IMR-90 (cell line): ENCODE measurements at regions of chr12 and their contacts with region 1.

Region 1: GRCh38 chr12:120228291-120229070 is 27.6 kb upstream of the RPLP0 start:
- DNase-seq: peak; percentile 79
- ATAC-seq: peak; percentile 45
- H3K4me3 ChIP-seq: no peak overlapping the region
- H3K27ac ChIP-seq: peak overlapping the region; percentile 93
- H3K4me1 ChIP-seq: peaks cover 53% of the 10 kb centered on the region
- H3K27me3 ChIP-seq: no peaks in the 10 kb centered on the region
- CTCF ChIP-seq: peak; percentile 96
- POLR2A ChIP-seq: peak; percentile 46; the same call in 1 of the 2 replicates
- RAD21 ChIP-seq: peak; percentile 98

Region 2: DNA sequence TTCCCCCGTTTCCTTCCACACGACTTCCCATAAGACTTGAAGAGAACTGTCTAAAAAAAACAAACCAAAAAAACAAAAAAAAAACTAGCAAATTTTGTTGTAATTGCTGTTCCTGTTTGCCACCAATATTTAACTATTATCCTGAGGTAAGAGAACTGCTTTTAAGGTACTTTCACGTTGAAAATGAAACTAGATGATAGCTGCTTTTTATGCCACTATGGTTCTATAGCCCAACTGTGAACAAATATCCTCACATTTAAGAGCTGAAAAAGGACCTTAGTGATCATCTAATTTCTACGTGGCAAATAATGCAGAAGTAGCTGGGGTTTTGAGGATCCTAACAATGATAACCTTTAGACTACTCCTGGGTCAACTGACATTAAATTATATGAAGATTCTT is 1954.4 kb before region 1 on chr12:
- CTCF ChIA-PET with region 1: interaction called, 12 read pairs
- POLR2A ChIA-PET with region 1: no interaction called
- dilution Hi-C with region 1: no loop called
- in situ Hi-C with region 1: no loop called
- intact Hi-C with region 1: no loop called
- DNase-seq: no peak
- ATAC-seq: no peak
- H3K4me3 ChIP-seq: no peak overlapping the region
- H3K27ac ChIP-seq: no peak overlapping the region
- H3K4me1 ChIP-seq: no peaks in the 10 kb centered on the region
- H3K27me3 ChIP-seq: no peaks in the 10 kb centered on the region
- CTCF ChIP-seq: no peak
- POLR2A ChIP-seq: no peak
- RAD21 ChIP-seq: no peak

Region 3: GRCh38 chr12:120242275-120242799 is 13.9 kb after region 1 on chr12:
- CTCF ChIA-PET with region 1: interaction called, 13 read pairs
- POLR2A ChIA-PET with region 1: interaction called, 12 read pairs
- dilution Hi-C with region 1: no loop called
- in situ Hi-C with region 1: no loop called
- intact Hi-C with region 1: no loop called
- DNase-seq: no peak
- ATAC-seq: no peak
- H3K4me3 ChIP-seq: no peak overlapping the region
- H3K27ac ChIP-seq: no peak overlapping the region
- H3K4me1 ChIP-seq: peaks cover 41% of the 10 kb centered on the region
- H3K27me3 ChIP-seq: no peaks in the 10 kb centered on the region
- CTCF ChIP-seq: no peak
- POLR2A ChIP-seq: no peak
- RAD21 ChIP-seq: no peak

Region 4: GRCh38 chr12:120257041-120257821 is 28.8 kb after region 1 on chr12:
- CTCF ChIA-PET with region 1: interaction called, 116 read pairs
- POLR2A ChIA-PET with region 1: interaction called, 39 read pairs
- dilution Hi-C with region 1: no loop called
- in situ Hi-C with region 1: loop called (anchors 5 kb)
- intact Hi-C with region 1: loop called (anchors 2 kb)
- DNase-seq: peak; percentile 93
- ATAC-seq: peak; percentile 83
- H3K4me3 ChIP-seq: no peak overlapping the region
- H3K27ac ChIP-seq: peak overlapping the region; percentile 70
- H3K4me1 ChIP-seq: peaks cover 28% of the 10 kb centered on the region
- H3K27me3 ChIP-seq: no peaks in the 10 kb centered on the region
- CTCF ChIP-seq: no peak
- POLR2A ChIP-seq: no peak
- RAD21 ChIP-seq: no peak

Region 5: DNA sequence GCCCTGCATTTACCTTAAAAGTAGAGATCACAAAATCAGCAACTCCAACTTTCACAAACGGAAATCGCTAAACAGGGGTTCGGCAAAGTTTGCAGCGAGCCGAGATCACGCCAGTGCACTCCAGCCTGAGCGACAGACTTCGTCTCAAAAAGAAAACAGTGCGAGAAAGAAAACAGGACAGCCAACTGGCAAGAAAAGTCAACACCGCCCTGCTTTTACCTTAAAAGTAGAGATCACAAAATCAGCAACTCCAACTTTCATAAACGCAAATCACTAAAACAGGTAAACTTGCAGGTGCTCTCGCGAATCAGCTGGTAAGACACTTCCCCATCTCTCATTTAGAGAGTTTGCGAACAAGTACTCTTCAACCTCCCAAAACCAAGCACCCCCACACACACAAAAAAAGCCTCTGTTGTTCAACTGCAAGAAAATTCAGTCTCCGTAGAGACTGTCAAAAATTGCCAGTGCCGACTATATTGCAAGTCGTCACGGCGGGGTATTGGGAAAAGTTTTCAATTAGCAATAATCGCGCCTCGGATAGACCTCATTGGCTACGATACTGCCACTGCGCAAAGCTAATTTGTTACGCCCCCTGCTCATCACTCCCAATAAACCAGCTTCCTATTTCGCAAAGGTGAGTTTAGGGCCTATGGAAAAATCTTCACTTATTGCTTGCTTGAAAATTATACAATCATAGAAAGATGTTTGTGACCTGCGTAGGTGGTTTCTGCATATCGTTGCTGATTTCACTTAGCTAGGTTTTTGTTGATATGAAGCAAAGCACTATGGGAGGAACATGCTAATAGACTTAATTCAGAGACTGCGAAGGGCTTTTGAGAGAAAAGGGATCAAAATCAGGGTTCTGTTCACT is 64.4 kb after region 1 on chr12 and contains the start of gene RNU4-1:
- CTCF ChIA-PET with region 1: interaction called, 7 read pairs
- POLR2A ChIA-PET with region 1: interaction called, 35 read pairs
- dilution Hi-C with region 1: no loop called
- in situ Hi-C with region 1: no loop called
- intact Hi-C with region 1: loop called (anchors 1 kb)
- DNase-seq: peak; percentile 97
- ATAC-seq: peak; percentile 53
- H3K4me3 ChIP-seq: peak within 1 kb of the TSS; percentile 56
- H3K27ac ChIP-seq: peak within 1 kb of the TSS; percentile 93
- H3K4me1 ChIP-seq: 0 out of 2 replicates have a peak, but pooled peaks cover 5% of the 10 kb centered on the region
- H3K27me3 ChIP-seq: no peaks in the 10 kb centered on the region
- CTCF ChIP-seq: no peak
- POLR2A ChIP-seq: peak; percentile 100
- RAD21 ChIP-seq: no peak
- total RNA-seq, gene RNU4-1: under 0.01 TPM in 2 replicates